ENCODE measurements at regions of chr2 and their contacts with region 1.

Region 1: DNA sequence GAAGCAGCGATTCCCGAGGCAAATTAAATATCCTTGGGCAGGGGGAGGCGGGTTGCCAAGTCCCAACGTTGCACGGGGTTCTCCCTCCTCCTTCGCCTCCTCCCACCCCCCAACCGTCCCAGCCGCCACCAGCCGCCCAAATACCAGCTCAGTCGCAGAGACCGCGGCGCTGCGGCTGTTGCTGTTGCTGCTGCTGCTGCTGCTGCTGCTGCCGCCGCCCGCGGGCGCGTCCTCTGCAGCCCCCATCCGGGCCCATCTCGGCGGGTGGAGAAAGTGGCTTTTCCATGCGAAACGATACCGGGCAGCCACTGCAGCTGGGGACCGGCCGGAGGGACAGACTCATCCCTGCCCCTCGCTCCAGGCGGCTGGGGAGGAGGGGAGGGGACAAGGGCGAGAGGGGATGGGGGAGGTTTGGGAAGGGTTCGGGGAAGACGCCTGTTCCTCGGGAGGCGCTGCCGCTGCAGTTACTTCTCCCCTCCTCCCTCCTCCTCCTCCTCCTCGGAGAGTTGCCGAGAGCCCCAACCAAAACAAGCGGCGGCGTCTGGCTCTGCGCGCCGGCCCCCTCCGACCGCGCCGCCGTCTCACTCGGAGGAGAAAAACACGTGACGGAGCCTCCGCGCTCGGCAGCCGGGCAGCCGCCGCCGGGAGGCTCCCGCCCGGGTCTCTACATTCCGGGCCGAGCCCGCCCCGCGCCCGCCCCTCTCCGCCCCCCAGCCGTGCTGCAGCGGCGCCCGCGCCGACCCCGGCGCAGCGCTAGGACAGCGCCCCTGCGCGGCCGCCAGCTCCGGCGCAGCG is at the start of gene IRS1:
- DNase-seq: peak; percentile 71
- H3K4me3 ChIP-seq: peak within 1 kb of the TSS; percentile 82 to 92 (median 85)
- H3K27ac ChIP-seq: peak within 1 kb of the TSS; percentile 62
- H3K4me1 ChIP-seq: peaks cover 39% of the 10 kb centered on the region
- H3K27me3 ChIP-seq: no peaks in the 10 kb centered on the region
- CTCF ChIP-seq: peak in 1 of 2 donors; percentile 14
- total RNA-seq, gene IRS1: 25.8 to 36.2 TPM

Region 2: DNA sequence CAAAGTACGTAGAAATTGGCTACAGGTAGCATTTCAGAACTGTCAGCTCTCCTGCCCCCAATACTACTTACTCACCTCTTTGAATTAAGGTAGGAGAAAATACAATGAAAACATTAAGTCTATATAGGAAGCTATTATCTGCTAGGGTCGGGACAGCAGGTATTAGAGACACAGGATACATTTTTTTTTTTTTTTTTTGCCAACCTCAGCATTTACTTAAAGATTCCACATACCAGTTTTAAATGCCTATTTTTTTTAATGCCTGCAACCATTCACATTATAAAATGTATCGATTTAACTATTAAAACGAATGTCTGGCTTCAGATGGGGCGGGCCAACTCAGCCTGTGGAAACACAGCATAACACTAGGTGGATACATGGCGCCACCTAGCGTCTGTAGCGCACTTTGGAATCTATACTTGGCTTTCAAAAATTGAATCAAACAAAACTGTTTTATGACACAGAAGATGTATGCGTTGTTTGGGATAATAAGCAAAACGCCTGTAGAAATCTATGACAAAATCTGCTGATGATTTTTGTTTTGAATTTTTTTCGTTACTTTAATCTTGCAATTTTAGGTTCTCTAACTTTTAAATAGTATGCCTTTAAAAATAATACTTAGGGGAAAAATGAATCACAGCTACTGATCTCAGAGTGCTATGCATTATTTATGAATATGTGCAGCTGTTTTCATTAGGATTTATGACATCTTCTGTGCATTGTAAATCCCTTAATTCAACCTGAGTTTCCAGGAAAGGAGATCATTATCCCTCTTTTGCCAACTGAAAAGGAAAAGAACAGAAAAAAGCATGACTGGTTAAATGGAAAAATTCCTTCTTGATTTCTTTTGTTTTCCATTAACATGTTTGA is 1138.9 kb before region 1 on chr2:
- CTCF ChIA-PET with region 1: interaction called, 10 read pairs
- dilution Hi-C with region 1: loop called (anchors 25 kb)
- in situ Hi-C with region 1: loop called in 1 of 2 experiments (anchors 5 kb)
- intact Hi-C with region 1: no loop called
- DNase-seq: peak; percentile 48
- H3K4me3 ChIP-seq: no peak overlapping the region
- H3K27ac ChIP-seq: no peak overlapping the region
- H3K4me1 ChIP-seq: no peaks in the 10 kb centered on the region
- H3K27me3 ChIP-seq: no peaks in the 10 kb centered on the region
- CTCF ChIP-seq: peak; percentile 76 to 92

Region 3: GRCh38 chr2:226063704-226064440 is 735.5 kb before region 1 on chr2:
- CTCF ChIA-PET with region 1: interaction called, 13 read pairs
- dilution Hi-C with region 1: no loop called
- in situ Hi-C with region 1: no loop called
- intact Hi-C with region 1: loop called (anchors 5 kb)
- DNase-seq: peak; percentile 97
- H3K4me3 ChIP-seq: no peak overlapping the region
- H3K27ac ChIP-seq: peak overlapping the region; percentile 87
- H3K4me1 ChIP-seq: peaks cover 34% of the 10 kb centered on the region
- H3K27me3 ChIP-seq: no peaks in the 10 kb centered on the region
- CTCF ChIP-seq: no peak

Region 4: GRCh38 chr2:226215902-226216503 is 583.4 kb before region 1 on chr2:
- CTCF ChIA-PET with region 1: interaction called, 6 read pairs
- dilution Hi-C with region 1: no loop called
- in situ Hi-C with region 1: no loop called
- intact Hi-C with region 1: loop called (anchors 1 kb)
- DNase-seq: peak; percentile 21
- H3K4me3 ChIP-seq: no peak overlapping the region
- H3K27ac ChIP-seq: no peak overlapping the region
- H3K4me1 ChIP-seq: peaks cover 21% of the 10 kb centered on the region
- H3K27me3 ChIP-seq: no peaks in the 10 kb centered on the region
- CTCF ChIP-seq: peak; percentile 60 to 78

Region 5: GRCh38 chr2:226423498-226423960 is 375.8 kb before region 1 on chr2:
- CTCF ChIA-PET with region 1: no interaction called
- dilution Hi-C with region 1: no loop called
- in situ Hi-C with region 1: no loop called
- intact Hi-C with region 1: loop called (anchors 1 kb)
- DNase-seq: peak; percentile 82
- H3K4me3 ChIP-seq: no peak overlapping the region
- H3K27ac ChIP-seq: no peak overlapping the region
- H3K4me1 ChIP-seq: peaks cover 45% of the 10 kb centered on the region
- H3K27me3 ChIP-seq: no peaks in the 10 kb centered on the region
- CTCF ChIP-seq: no peak

Region 6: GRCh38 chr2:226845386-226846116 is 46.2 kb after region 1 on chr2:
- CTCF ChIA-PET with region 1: no interaction called
- dilution Hi-C with region 1: no loop called
- in situ Hi-C with region 1: no loop called
- intact Hi-C with region 1: no loop called
- DNase-seq: no peak
- H3K4me3 ChIP-seq: no peak overlapping the region
- H3K27ac ChIP-seq: no peak overlapping the region
- H3K4me1 ChIP-seq: no peaks in the 10 kb centered on the region
- H3K27me3 ChIP-seq: no peaks in the 10 kb centered on the region
- CTCF ChIP-seq: no peak

Region 7: GRCh38 chr2:226984750-226985582 is 185.6 kb after region 1 on chr2:
- CTCF ChIA-PET with region 1: interaction called, 5 read pairs
- dilution Hi-C with region 1: no loop called
- in situ Hi-C with region 1: no loop called
- intact Hi-C with region 1: loop called (anchors 1 kb)
- DNase-seq: peak; percentile 34
- H3K4me3 ChIP-seq: no peak overlapping the region
- H3K27ac ChIP-seq: no peak overlapping the region
- H3K4me1 ChIP-seq: no peaks in the 10 kb centered on the region
- H3K27me3 ChIP-seq: no peaks in the 10 kb centered on the region
- CTCF ChIP-seq: peak; percentile 52 to 65